MCF 10A (cell line): ENCODE measurements at regions of chr3 and their contacts with region 1.

Region 1: GRCh38 chr3:11140054-11140712 is 14.1 kb upstream of the HRH1 start:
- DNase-seq: peak; percentile 75
- H3K4me3 Mint-ChIP-seq: peak overlapping the region; percentile 38
- H3K27ac Mint-ChIP-seq: peak overlapping the region; percentile 16
- H3K4me1 Mint-ChIP-seq: peaks cover 37% of the 10 kb centered on the region
- H3K27me3 Mint-ChIP-seq: no peaks in the 10 kb centered on the region
- CTCF ChIP-seq: no peak

Region 2: DNA sequence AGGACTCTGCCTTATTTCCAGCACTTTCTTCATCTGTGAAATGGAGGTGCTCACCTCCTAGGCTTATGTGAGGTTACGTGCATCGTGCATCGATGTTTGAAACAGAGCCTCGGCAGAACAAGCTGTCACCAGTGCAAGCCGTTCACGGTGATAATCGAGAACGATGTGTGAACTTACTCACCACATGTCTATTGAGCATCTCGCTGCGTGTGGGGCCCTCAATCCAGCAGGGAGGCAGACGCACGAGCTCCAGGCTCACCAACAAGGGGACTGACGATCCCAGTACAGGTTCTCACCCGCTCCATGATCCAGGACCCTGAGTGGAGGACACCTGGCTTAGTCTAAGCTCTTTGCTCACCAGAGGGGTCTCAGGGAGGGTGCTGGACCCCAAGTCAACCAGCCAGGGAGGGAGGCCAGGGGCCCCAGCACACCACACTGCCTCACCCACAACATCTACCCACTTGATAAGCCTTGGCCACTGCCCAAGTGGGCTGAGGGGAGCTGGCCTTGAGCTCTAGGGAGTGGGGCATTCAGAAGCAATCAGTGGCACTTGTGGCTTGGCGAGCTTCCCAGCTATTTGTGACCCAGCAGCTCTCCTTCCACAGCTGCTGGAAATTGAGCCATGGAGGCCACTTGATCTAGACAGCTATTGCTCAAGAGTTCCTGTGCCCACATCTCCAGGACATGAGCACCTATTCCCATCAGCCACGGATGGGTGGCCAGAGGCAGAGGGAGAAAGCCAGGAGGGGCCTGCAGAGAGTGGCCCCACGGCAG is 182.0 kb before region 1 on chr3:
- CTCF ChIA-PET with region 1: no interaction called
- POLR2A ChIA-PET with region 1: no interaction called
- intact Hi-C with region 1: no loop called
- DNase-seq: peak; percentile 15
- H3K4me3 Mint-ChIP-seq: no peak overlapping the region
- H3K27ac Mint-ChIP-seq: no peak overlapping the region
- H3K4me1 Mint-ChIP-seq: no peaks in the 10 kb centered on the region
- H3K27me3 Mint-ChIP-seq: peaks cover 48% of the 10 kb centered on the region
- CTCF ChIP-seq: no peak

Region 3: GRCh38 chr3:11096266-11097135 is 43.7 kb before region 1 on chr3:
- CTCF ChIA-PET with region 1: interaction called, 3 read pairs
- POLR2A ChIA-PET with region 1: interaction called, 9 read pairs
- intact Hi-C with region 1: loop called (anchors 2 kb)
- DNase-seq: peak; percentile 95
- H3K4me3 Mint-ChIP-seq: peak overlapping the region; percentile 71
- H3K27ac Mint-ChIP-seq: peak overlapping the region; percentile 78
- H3K4me1 Mint-ChIP-seq: peaks cover 11% of the 10 kb centered on the region
- H3K27me3 Mint-ChIP-seq: no peaks in the 10 kb centered on the region
- CTCF ChIP-seq: peak; percentile 1

Region 4: GRCh38 chr3:11155341-11156025 is 15.3 kb after region 1 on chr3:
- CTCF ChIA-PET with region 1: interaction called, 14 read pairs
- POLR2A ChIA-PET with region 1: interaction called, 18 read pairs
- intact Hi-C with region 1: no loop called
- DNase-seq: peak; percentile 79
- H3K4me3 Mint-ChIP-seq: peak overlapping the region; percentile 48
- H3K27ac Mint-ChIP-seq: peak overlapping the region; percentile 9
- H3K4me1 Mint-ChIP-seq: peaks cover 22% of the 10 kb centered on the region
- H3K27me3 Mint-ChIP-seq: no peaks in the 10 kb centered on the region
- CTCF ChIP-seq: peak; percentile 46

Region 5: GRCh38 chr3:11185564-11186317 is 45.6 kb after region 1 on chr3:
- CTCF ChIA-PET with region 1: interaction called, 5 read pairs
- POLR2A ChIA-PET with region 1: interaction called, 11 read pairs
- intact Hi-C with region 1: no loop called
- DNase-seq: peak; percentile 99
- H3K4me3 Mint-ChIP-seq: peak overlapping the region; percentile 75
- H3K27ac Mint-ChIP-seq: peak overlapping the region; percentile 100
- H3K4me1 Mint-ChIP-seq: peaks cover 36% of the 10 kb centered on the region
- H3K27me3 Mint-ChIP-seq: no peaks in the 10 kb centered on the region
- CTCF ChIP-seq: no peak

Region 6: DNA sequence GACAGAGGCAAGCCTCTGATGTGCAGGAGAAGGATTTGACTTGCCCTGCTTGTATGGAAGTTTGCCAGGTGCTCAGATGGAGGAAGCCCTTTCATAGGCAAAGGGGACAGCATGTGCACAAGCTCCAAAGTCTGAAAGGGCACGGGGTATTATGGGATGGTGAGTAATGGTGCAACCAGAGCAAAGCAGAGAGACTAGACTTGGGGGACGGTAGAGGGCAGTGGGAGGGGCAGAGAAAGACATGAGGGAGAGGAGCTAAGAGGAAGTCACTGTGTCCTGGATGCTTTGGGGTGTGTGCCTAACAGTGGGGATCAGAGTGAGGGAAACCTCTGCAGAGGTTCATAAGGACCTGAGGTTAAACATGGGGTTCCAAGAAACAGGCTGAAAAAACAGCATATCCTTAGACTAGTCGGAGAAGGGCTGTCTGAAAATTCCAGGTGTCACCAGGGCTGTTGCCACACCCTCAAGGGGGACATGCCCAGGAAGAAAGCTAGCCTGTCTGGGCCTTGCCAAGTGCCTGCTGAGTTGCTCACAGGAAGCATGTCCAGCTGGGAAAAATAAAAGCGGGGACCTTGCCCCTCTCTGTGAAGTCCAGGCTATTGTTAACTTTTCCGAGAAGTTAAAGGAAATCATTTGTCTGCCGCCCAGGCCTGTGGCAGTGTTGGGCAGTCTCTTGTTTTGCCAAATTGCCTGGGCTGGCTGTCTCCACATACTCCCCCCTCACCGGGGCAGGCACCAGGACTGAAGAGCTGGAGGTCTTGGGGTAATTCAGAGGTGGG is 61.3 kb after region 1 on chr3:
- CTCF ChIA-PET with region 1: no interaction called
- POLR2A ChIA-PET with region 1: interaction called, 3 read pairs
- intact Hi-C with region 1: loop called (anchors 1 kb)
- DNase-seq: peak; percentile 76
- H3K4me3 Mint-ChIP-seq: peak overlapping the region; percentile 10
- H3K27ac Mint-ChIP-seq: peak overlapping the region; percentile 89
- H3K4me1 Mint-ChIP-seq: peaks cover 25% of the 10 kb centered on the region
- H3K27me3 Mint-ChIP-seq: no peaks in the 10 kb centered on the region
- CTCF ChIP-seq: no peak

Region 7: GRCh38 chr3:11236595-11237461 is 96.6 kb after region 1 on chr3:
- CTCF ChIA-PET with region 1: interaction called, 3 read pairs
- POLR2A ChIA-PET with region 1: interaction called, 13 read pairs
- intact Hi-C with region 1: no loop called
- DNase-seq: peak; percentile 82
- H3K4me3 Mint-ChIP-seq: no peak overlapping the region
- H3K27ac Mint-ChIP-seq: peak overlapping the region; percentile 49
- H3K4me1 Mint-ChIP-seq: peaks cover 26% of the 10 kb centered on the region
- H3K27me3 Mint-ChIP-seq: no peaks in the 10 kb centered on the region
- CTCF ChIP-seq: peak; percentile 95